ENCODE measurements at regions of chr6 and their contacts with region 1.

Region 1: DNA sequence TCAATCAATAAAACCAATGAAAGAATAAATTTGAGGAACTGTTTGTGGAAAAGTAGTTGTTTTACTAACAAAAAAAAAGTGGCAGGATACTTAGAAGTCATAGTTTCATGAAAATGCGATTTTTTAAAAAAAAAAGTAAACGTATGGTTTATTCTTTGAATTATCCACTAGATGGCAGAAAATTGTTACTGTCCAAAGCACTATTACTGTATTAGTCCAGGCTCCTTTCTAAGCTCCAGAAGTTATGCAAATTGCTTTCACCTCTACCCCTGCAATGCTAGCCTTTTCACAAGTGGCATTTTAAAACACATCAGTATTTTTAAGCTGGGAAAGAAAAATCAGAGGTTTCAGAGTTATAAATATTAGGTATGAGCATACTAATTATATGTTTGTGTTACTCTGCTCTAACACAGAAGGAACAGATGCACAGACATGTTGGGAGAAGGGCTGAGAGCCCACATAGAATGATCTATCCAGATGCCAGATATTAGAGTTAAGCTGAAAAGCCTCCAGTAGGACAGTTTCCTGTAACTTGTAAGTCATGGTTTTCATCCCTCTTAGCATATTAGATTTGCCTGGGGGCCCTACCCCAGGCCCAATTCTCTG is 63.9 kb downstream of the FHL5 start:
- DNase-seq: no peak
- H3K4me3 ChIP-seq: no peak overlapping the region
- H3K27ac ChIP-seq: no peak overlapping the region
- H3K4me1 ChIP-seq: no peaks in the 10 kb centered on the region
- H3K27me3 ChIP-seq: no peaks in the 10 kb centered on the region
- CTCF ChIP-seq: peak in 3 of 4 experiments; percentile 33 to 61 (median 41)
- POLR2A ChIP-seq: no peak

Region 2: GRCh38 chr6:96897383-96898240 is 270.8 kb after region 1 on chr6 and contains the start of gene NDUFAF4:
- intact Hi-C with region 1: loop called (anchors 10 kb)
- DNase-seq: peak; percentile 95
- H3K4me3 ChIP-seq: peak within 1 kb of the TSS; percentile 78 to 80
- H3K27ac ChIP-seq: peak within 1 kb of the TSS; percentile 67 to 82
- H3K4me1 ChIP-seq: peaks cover 5% of the 10 kb centered on the region
- H3K27me3 ChIP-seq: no peaks in the 10 kb centered on the region
- CTCF ChIP-seq: peak; percentile 75 to 98 (median 96)
- POLR2A ChIP-seq: no peak
- total RNA-seq, gene NDUFAF4: 15.6 to 29.9 TPM

Measured in prostate gland (tissue), 2 donors.